Pancreas (tissue), 10 donors: ENCODE measurements at regions of chr11 and their contacts with region 1.

Region 1: GRCh38 chr11:26753723-26754504 is 32.1 kb upstream of the SLC5A12 start:
- DNase-seq: peak in 3 of 6 donors; percentile 12 to 45 (median 17)
- ATAC-seq: peak; percentile 69 to 88 (median 86)
- H3K4me3 ChIP-seq: no peak overlapping the region
- H3K27ac ChIP-seq: no peak overlapping the region
- H3K4me1 ChIP-seq: no peaks in the 10 kb centered on the region
- H3K27me3 ChIP-seq: no peaks in the 10 kb centered on the region
- CTCF ChIP-seq: peak; percentile 41 to 61 (median 45)

Region 2: GRCh38 chr11:26510756-26511155 is 243.2 kb before region 1 on chr11:
- intact Hi-C with region 1: no loop called
- DNase-seq: no peak
- ATAC-seq: no peak
- H3K4me3 ChIP-seq: no peak overlapping the region
- H3K27ac ChIP-seq: no peak overlapping the region
- H3K4me1 ChIP-seq: no peaks in the 10 kb centered on the region
- H3K27me3 ChIP-seq: no peaks in the 10 kb centered on the region
- CTCF ChIP-seq: no peak

Region 3: GRCh38 chr11:26572781-26573255 is 181.1 kb before region 1 on chr11:
- intact Hi-C with region 1: no loop called
- DNase-seq: no peak
- ATAC-seq: peak in 3 of 4 donors; percentile 38 to 61 (median 57)
- H3K4me3 ChIP-seq: no peak overlapping the region
- H3K27ac ChIP-seq: peak overlapping the region; percentile 11 to 75 (median 45)
- H3K4me1 ChIP-seq: no peaks in the 10 kb centered on the region
- H3K27me3 ChIP-seq: no peaks in the 10 kb centered on the region
- CTCF ChIP-seq: no peak

Region 4: GRCh38 chr11:26839911-26840698 is 86.2 kb after region 1 on chr11:
- intact Hi-C with region 1: no loop called
- DNase-seq: no peak
- ATAC-seq: no peak
- H3K4me3 ChIP-seq: no peak overlapping the region
- H3K27ac ChIP-seq: no peak overlapping the region
- H3K4me1 ChIP-seq: no peaks in the 10 kb centered on the region
- H3K27me3 ChIP-seq: no peaks in the 10 kb centered on the region
- CTCF ChIP-seq: no peak

Region 5: DNA sequence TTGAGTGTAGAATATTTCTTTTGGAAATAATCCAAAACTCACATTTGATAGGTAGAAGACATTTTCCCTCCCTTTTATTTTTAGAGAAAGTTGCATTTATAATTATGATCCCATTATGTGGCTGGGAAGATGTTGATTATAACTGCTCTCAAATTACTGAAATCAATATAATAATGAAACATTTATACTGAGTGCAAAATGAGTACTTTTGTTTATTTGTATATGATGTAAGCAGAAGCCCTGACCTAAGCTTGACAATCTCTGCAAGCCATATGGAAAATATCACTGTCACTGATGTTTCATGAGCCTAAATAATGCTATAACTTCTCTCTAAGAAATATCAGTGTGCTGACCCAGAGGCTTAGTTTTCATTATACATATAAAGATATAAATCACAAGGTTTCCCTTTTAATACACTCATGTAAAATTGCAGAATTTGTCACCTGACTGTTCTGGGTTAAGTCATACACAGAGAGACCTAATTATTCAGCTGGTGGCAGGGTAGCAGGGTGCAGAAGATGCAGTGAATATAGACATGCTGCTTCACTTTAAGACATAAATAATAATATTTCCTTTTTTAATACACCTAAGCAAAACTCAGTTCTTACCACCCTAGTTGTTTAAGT is 385.9 kb after region 1 on chr11:
- intact Hi-C with region 1: loop called in 1 of 3 experiments (anchors 5 kb)
- DNase-seq: no peak
- ATAC-seq: no peak
- H3K4me3 ChIP-seq: no peak overlapping the region
- H3K27ac ChIP-seq: no peak overlapping the region
- H3K4me1 ChIP-seq: no peaks in the 10 kb centered on the region
- H3K27me3 ChIP-seq: no peaks in the 10 kb centered on the region
- CTCF ChIP-seq: no peak

Region 6: GRCh38 chr11:27166130-27166529 is 412.2 kb after region 1 on chr11:
- intact Hi-C with region 1: loop called in 2 of 3 experiments (anchors 5 kb)
- DNase-seq: no peak
- ATAC-seq: no peak
- H3K4me3 ChIP-seq: no peak overlapping the region
- H3K27ac ChIP-seq: no peak overlapping the region
- H3K4me1 ChIP-seq: no peaks in the 10 kb centered on the region
- H3K27me3 ChIP-seq: no peaks in the 10 kb centered on the region
- CTCF ChIP-seq: no peak